BJ (cell line): ENCODE measurements at regions of chr4 and their contacts with region 1.

Region 1: DNA sequence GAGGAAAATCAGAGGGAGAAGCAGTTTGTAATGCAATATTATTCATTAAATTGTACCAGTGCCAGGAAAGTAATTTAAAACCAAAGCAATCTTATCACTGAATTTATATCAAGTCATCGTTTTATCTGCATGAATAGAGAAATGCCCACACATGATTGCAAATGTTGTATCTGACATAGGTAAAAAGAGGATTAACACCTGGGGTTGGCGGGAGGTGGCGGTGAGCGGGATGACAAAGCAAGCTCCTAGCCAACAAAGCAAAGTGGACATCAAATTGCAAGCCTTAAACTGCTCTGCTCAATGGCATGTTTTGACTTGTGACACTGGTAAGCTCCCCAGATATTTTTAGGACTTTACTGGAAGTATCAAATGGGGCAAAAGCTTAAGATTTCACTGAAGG is 16.4 kb downstream of the HPGD start:
- DNase-seq: no peak
- H3K4me3 ChIP-seq: no peak overlapping the region
- H3K27me3 ChIP-seq: no peaks in the 10 kb centered on the region
- CTCF ChIP-seq: no peak

Region 2: DNA sequence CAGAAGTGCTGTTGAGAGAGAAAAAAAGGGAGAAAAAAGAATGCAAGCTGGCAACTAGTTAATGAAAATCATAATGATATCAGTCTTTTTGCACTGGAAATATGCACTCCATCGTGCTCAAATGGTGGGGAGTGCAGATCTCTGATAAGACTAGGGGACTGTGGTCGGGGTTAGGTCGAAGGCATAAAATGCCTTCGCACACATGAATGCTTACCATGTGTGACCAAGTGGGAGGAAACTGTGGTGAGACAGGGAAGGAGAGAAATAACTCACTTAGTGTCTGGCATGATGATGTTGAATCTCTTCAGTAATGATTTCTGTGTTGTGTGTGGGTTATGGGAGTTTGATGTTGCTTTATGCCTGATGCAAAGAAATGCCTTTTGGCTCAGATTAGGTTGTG is 581.3 kb before region 1 on chr4:
- CTCF ChIA-PET with region 1: no interaction called
- POLR2A ChIA-PET with region 1: no interaction called
- DNase-seq: no peak
- H3K4me3 ChIP-seq: no peak overlapping the region
- H3K27me3 ChIP-seq: no peaks in the 10 kb centered on the region
- CTCF ChIP-seq: no peak

Region 3: GRCh38 chr4:174524242-174524641 is 18.4 kb after region 1 on chr4:
- CTCF ChIA-PET with region 1: interaction called, 10 read pairs
- POLR2A ChIA-PET with region 1: no interaction called
- DNase-seq: no peak
- H3K4me3 ChIP-seq: no peak overlapping the region
- H3K27me3 ChIP-seq: peaks cover 9% of the 10 kb centered on the region
- CTCF ChIP-seq: no peak

Region 4: GRCh38 chr4:174591243-174592021 is 85.5 kb after region 1 on chr4:
- CTCF ChIA-PET with region 1: no interaction called
- POLR2A ChIA-PET with region 1: no interaction called
- DNase-seq: no peak
- H3K4me3 ChIP-seq: no peak overlapping the region
- H3K27me3 ChIP-seq: no peaks in the 10 kb centered on the region
- CTCF ChIP-seq: no peak